A673 (cell line): ENCODE measurements at regions of chr4 and their contacts with region 1.

Region 1: DNA sequence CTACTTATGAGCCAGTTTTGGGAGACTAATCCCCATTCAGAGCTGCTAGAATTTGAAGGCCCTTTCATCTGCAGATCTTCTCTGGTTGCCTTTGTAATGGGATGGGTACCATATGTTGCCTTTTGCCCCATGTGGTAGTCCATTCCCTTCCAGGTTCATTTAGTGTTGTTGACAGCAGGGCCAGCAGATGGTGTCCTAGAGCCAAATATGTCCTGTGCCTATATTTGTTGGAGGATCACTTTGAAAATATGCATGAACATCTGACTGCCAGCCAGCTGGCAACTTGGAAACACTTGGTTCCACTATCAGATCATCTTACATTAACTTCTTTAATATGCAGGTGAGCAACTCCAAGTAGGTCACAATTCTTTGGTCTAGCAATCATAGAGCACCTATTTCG is 30.4 kb downstream of the CFAP299 start:
- DNase-seq: peak; percentile 16
- H3K4me3 ChIP-seq: no peak overlapping the region
- H3K27ac ChIP-seq: no peak overlapping the region
- H3K4me1 ChIP-seq: no peaks in the 10 kb centered on the region
- H3K27me3 ChIP-seq: no peaks in the 10 kb centered on the region
- CTCF ChIP-seq: peak; percentile 56

Region 2: GRCh38 chr4:79886557-79886956 is 479.4 kb before region 1 on chr4:
- CTCF ChIA-PET with region 1: no interaction called
- POLR2A ChIA-PET with region 1: no interaction called
- intact Hi-C with region 1: no loop called
- DNase-seq: no peak
- H3K4me3 ChIP-seq: no peak overlapping the region
- H3K27ac ChIP-seq: no peak overlapping the region
- H3K4me1 ChIP-seq: no peaks in the 10 kb centered on the region
- H3K27me3 ChIP-seq: no peaks in the 10 kb centered on the region
- CTCF ChIP-seq: no peak

Region 3: DNA sequence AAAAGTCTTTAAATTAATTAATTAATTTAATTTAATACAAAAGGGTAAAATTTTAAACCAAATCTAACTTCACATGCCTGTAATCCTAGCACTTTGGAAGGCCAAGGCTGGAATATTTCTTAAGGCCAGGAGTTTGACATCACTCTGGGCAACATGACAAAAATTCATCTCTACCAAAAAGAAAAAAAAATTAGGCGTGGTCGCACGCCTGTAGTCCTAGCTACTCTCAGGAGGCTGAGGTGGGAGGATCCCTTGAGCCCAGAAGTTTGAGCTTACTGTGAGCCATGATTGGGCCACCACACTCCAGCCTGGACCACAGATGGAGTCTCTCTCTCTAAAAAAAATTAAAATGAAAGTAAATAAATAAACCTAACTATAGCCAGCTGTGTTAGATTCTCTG is 253.7 kb before region 1 on chr4:
- CTCF ChIA-PET with region 1: no interaction called
- POLR2A ChIA-PET with region 1: no interaction called
- intact Hi-C with region 1: no loop called
- DNase-seq: no peak
- H3K4me3 ChIP-seq: no peak overlapping the region
- H3K27ac ChIP-seq: no peak overlapping the region
- H3K4me1 ChIP-seq: no peaks in the 10 kb centered on the region
- H3K27me3 ChIP-seq: no peaks in the 10 kb centered on the region
- CTCF ChIP-seq: no peak

Region 4: DNA sequence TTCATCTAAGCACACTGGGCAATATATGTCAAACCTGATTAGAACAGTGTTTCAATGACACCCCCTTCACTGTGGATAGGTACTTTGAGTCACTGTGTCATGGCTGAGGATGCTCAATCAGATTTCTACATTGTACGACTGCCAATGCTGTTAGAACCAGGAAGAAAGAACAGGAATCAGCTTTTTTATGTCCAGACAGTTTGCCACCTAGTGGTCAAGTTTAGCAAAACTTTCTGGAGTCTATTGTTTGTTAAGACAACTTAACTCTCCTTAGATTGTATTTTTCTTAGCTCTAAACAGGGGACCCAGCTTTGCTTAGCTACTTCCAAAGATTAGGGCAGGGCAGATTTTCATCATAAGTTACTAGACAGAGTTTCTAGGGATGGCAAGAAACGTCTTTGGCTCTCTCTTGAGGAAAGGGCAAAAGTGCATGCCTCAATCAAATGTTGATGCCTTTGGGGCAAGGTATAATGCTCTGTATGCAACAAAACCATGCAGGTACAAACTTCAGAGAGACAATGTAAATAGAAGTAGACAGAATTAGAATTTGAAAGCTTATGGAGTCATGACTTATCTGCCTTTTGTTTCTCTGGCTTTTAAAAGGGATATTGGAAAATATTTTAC is 624.1 kb after region 1 on chr4:
- CTCF ChIA-PET with region 1: interaction called, 3 read pairs
- POLR2A ChIA-PET with region 1: no interaction called
- intact Hi-C with region 1: loop called (anchors 2 kb)
- DNase-seq: peak; percentile 48
- H3K4me3 ChIP-seq: no peak overlapping the region
- H3K27ac ChIP-seq: no peak overlapping the region
- H3K4me1 ChIP-seq: no peaks in the 10 kb centered on the region
- H3K27me3 ChIP-seq: no peaks in the 10 kb centered on the region
- CTCF ChIP-seq: peak; percentile 59

Region 5: GRCh38 chr4:81040012-81040659 is 674.2 kb after region 1 on chr4:
- CTCF ChIA-PET with region 1: no interaction called
- POLR2A ChIA-PET with region 1: no interaction called
- intact Hi-C with region 1: loop called (anchors 5 kb)
- DNase-seq: peak; percentile 16
- H3K4me3 ChIP-seq: no peak overlapping the region
- H3K27ac ChIP-seq: no peak overlapping the region
- H3K4me1 ChIP-seq: no peaks in the 10 kb centered on the region
- H3K27me3 ChIP-seq: peaks cover 19% of the 10 kb centered on the region
- CTCF ChIP-seq: peak; percentile 53

Region 6: GRCh38 chr4:81052119-81053068 is 686.5 kb after region 1 on chr4:
- CTCF ChIA-PET with region 1: no interaction called
- POLR2A ChIA-PET with region 1: no interaction called
- intact Hi-C with region 1: loop called (anchors 5 kb)
- DNase-seq: peak; percentile 49
- H3K4me3 ChIP-seq: no peak overlapping the region
- H3K27ac ChIP-seq: no peak overlapping the region
- H3K4me1 ChIP-seq: no peaks in the 10 kb centered on the region
- H3K27me3 ChIP-seq: no peaks in the 10 kb centered on the region
- CTCF ChIP-seq: peak; percentile 58